PC-9 (cell line): ENCODE measurements at regions of chr17 and their contacts with region 1.

Region 1: DNA sequence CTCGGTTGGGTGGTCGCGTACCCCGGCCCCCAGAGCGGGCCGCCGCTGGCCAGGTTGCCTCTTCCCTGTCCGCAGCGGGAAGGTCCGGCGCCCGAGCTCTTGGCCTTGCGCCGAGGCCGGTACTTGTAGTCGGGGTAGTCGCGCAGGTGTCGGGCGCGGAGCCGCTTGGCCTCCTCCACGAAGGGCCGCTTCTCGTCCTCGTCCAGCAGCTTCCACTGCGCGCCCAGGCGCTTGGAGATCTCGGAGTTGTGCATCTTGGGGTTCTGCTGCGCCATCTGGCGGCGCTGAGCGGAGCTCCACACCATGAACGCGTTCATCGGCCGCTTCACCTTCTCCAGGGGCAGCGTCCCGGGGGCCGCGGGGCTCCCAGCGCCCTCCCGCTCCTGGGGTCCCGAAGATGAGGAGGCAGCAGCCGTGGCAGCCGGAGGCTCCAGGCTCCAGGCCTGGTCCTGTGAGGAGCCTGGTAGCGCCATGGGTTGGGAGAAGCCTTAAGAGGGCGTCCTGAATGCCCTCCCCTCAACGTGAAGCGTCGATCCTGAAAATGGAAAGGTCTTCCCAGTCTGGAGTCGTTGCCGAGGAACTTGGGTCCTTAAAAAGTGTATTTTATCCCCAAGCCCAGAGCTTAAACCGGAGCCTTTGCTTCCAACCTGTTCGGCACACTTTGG is 558 bp downstream of the SOX15 start:
- DNase-seq: peak; percentile 72 to 88
- H3K4me3 ChIP-seq: peak overlapping the region; percentile 83
- H3K27ac ChIP-seq: peak overlapping the region; percentile 97
- H3K4me1 ChIP-seq: peaks cover 39% of the 10 kb centered on the region
- H3K27me3 ChIP-seq: no peaks in the 10 kb centered on the region
- CTCF ChIP-seq: peak; percentile 83

Region 2: GRCh38 chr17:7021993-7022778 is 567.1 kb before region 1 on chr17:
- CTCF ChIA-PET with region 1: no interaction called
- POLR2A ChIA-PET with region 1: interaction called, 18 read pairs
- intact Hi-C with region 1: no loop called
- DNase-seq: peak in 1 of 2 experiments; percentile 79
- H3K4me3 ChIP-seq: no peak overlapping the region; the same call in 1 of the 2 replicates
- H3K27ac ChIP-seq: no peak overlapping the region
- H3K4me1 ChIP-seq: 0 out of 2 replicates have a peak, but pooled peaks cover 4% of the 10 kb centered on the region
- H3K27me3 ChIP-seq: no peaks in the 10 kb centered on the region
- CTCF ChIP-seq: peak; percentile 94

Region 3: GRCh38 chr17:7314719-7315569 is 274.4 kb before region 1 on chr17 and contains the start of gene GPS2:
- CTCF ChIA-PET with region 1: interaction called, 13 read pairs
- POLR2A ChIA-PET with region 1: no interaction called
- intact Hi-C with region 1: no loop called
- DNase-seq: peak; percentile 80 to 94
- H3K4me3 ChIP-seq: peak within 1 kb of the TSS; percentile 97
- H3K27ac ChIP-seq: peak within 1 kb of the TSS; percentile 64
- H3K4me1 ChIP-seq: peaks cover 40% of the 10 kb centered on the region
- H3K27me3 ChIP-seq: no peaks in the 10 kb centered on the region
- CTCF ChIP-seq: no peak
- total RNA-seq, gene GPS2: 43.5 and 61.3 TPM in 2 replicates

Region 4: DNA sequence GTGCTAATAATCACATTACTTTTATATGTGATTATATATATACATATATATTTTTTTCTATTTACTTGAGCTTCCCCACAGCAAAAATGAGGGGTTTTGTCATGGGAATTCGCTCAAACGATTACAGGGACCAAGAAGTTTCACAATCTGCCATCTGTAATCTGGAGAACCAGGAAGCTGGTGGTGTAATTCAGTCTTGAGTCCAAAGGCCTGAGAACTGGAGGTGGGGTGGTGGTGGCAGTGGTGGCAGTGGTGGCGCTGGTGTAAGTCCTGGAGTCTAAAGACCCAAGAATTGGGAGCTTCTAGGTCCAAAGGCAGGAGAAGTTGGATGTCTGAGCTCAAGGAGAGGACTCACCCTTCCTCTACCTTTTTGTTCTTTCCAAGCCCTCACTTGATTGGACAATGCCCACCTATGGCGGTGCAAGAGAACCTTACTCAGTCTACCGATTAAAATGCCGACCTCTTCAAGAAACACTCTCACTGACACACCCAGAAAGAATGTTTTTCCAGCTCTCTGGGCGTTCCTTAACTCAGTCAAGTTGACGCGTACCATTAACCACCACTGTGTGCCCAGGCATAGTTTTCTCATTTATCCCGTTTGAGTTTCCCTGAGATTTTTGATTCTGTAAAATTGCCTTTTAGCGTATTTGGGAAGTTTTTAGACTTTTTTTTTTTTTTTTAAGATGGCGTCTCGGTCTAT is 73.3 kb before region 1 on chr17:
- CTCF ChIA-PET with region 1: interaction called, 5 read pairs
- POLR2A ChIA-PET with region 1: no interaction called
- intact Hi-C with region 1: loop called (anchors 1 kb)
- DNase-seq: no peak
- H3K4me3 ChIP-seq: no peak overlapping the region
- H3K27ac ChIP-seq: no peak overlapping the region
- H3K4me1 ChIP-seq: no peaks in the 10 kb centered on the region
- H3K27me3 ChIP-seq: no peaks in the 10 kb centered on the region
- CTCF ChIP-seq: no peak

Region 5: DNA sequence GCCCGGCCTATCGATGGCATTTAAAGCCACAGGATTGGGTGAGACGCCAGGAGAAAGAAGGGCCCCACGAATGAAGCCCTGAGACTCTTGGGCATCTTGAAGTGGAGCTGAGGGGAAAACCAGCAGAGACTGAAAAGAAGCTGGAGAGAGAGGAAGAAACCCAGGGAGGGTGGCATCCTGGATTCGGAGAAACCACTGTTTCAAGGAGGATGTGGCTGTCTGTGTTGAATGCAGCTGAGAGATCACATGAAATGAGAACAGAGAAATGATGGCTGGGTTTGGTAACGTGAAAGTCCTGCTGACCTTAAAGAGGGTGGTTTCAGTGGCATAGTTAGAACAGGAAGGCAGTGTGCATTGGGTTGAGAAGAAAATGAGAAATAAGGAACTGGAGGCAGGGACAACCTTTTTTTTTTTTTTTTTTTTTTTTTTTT is 36.7 kb before region 1 on chr17:
- CTCF ChIA-PET with region 1: no interaction called
- POLR2A ChIA-PET with region 1: no interaction called
- intact Hi-C with region 1: no loop called
- DNase-seq: no peak
- H3K4me3 ChIP-seq: no peak overlapping the region
- H3K27ac ChIP-seq: no peak overlapping the region
- H3K4me1 ChIP-seq: no peaks in the 10 kb centered on the region
- H3K27me3 ChIP-seq: no peaks in the 10 kb centered on the region
- CTCF ChIP-seq: no peak

Region 6: DNA sequence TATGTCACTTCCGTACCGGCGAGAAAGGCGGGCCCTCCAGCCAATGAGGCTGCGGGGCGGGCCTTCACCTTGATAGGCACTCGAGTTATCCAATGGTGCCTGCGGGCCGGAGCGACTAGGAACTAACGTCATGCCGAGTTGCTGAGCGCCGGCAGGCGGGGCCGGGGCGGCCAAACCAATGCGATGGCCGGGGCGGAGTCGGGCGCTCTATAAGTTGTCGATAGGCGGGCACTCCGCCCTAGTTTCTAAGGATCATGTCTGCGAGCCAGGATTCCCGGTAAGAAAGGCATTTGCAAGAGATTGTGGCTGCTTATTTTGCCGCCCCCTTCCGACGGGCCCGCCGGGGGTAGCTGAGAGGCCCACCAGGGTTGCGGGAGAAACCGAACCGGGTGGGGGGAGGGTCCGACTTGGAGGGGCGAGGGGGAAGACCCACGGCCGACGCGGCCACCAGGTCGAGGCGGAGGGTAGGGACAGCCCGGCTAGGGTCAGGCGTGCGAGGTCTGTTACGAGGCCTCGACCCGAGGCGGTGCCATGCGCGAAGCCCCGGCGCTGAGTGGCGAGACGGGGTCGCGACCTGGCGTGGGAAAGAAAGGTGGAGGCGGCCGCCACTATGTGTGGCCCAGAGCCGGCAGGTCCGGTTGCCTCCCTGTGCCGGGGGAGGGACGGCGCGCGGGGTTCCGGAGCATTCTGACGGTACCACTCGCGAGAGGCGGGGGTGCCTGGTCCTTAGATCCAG is 16.6 kb before region 1 on chr17:
- CTCF ChIA-PET with region 1: interaction called, 13 read pairs
- POLR2A ChIA-PET with region 1: interaction called, 10 read pairs
- intact Hi-C with region 1: loop called (anchors 2 kb)
- DNase-seq: peak; percentile 96 to 100
- H3K4me3 ChIP-seq: peak overlapping the region; percentile 91
- H3K27ac ChIP-seq: peak overlapping the region; percentile 90
- H3K4me1 ChIP-seq: peaks cover 33% of the 10 kb centered on the region
- H3K27me3 ChIP-seq: no peaks in the 10 kb centered on the region
- CTCF ChIP-seq: no peak

Region 7: GRCh38 chr17:7716901-7717755 is 127.8 kb after region 1 on chr17 and contains the start of gene DNAH2:
- CTCF ChIA-PET with region 1: interaction called, 10 read pairs
- POLR2A ChIA-PET with region 1: no interaction called
- intact Hi-C with region 1: loop called (anchors 1 kb)
- DNase-seq: peak; percentile 71 to 91
- H3K4me3 ChIP-seq: peak within 1 kb of the TSS; percentile 67
- H3K27ac ChIP-seq: no peak within 1 kb of the TSS
- H3K4me1 ChIP-seq: peaks cover 7% of the 10 kb centered on the region
- H3K27me3 ChIP-seq: no peaks in the 10 kb centered on the region
- CTCF ChIP-seq: peak; percentile 50
- total RNA-seq, gene DNAH2: 10.6 and 11.6 TPM in 2 replicates